PC-3 (cell line): ENCODE measurements at regions of chr10 and their contacts with region 1.

Region 1: DNA sequence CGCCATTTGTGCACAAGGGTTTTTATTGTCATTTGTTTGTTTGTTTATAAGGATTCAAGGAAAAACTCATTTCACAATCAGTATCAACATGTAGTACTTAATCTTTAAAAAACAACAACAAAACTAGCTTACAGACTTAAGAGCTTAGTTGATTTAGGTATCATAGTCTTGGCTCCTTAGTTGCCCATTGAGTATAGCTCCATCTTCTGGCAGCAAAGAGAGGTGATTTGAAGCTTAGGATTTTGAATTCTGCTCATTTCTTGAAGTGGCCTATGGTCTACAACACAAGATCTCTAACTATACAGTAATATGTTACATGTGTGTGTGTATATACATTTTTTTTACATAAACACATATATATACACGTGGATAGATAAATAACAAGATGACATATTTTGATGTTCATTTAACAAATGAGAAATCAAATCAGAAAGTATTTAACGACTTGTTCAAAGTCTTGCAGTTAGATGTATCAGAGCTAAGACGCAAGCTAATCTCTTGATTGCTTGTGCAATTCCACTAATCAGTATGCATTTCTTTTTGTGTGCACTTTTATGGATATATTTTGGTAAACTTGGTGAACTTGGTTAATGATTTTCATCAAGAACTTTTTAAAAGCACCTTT is 307.3 kb downstream of the CAMK1D start:
- DNase-seq: peak; percentile 60
- ATAC-seq: peak; percentile 43
- H3K4me3 ChIP-seq: no peak overlapping the region
- H3K27ac ChIP-seq: no peak overlapping the region
- H3K4me1 ChIP-seq: no peaks in the 10 kb centered on the region
- H3K27me3 ChIP-seq: no peaks in the 10 kb centered on the region
- CTCF ChIP-seq: peak; percentile 76

Region 2: DNA sequence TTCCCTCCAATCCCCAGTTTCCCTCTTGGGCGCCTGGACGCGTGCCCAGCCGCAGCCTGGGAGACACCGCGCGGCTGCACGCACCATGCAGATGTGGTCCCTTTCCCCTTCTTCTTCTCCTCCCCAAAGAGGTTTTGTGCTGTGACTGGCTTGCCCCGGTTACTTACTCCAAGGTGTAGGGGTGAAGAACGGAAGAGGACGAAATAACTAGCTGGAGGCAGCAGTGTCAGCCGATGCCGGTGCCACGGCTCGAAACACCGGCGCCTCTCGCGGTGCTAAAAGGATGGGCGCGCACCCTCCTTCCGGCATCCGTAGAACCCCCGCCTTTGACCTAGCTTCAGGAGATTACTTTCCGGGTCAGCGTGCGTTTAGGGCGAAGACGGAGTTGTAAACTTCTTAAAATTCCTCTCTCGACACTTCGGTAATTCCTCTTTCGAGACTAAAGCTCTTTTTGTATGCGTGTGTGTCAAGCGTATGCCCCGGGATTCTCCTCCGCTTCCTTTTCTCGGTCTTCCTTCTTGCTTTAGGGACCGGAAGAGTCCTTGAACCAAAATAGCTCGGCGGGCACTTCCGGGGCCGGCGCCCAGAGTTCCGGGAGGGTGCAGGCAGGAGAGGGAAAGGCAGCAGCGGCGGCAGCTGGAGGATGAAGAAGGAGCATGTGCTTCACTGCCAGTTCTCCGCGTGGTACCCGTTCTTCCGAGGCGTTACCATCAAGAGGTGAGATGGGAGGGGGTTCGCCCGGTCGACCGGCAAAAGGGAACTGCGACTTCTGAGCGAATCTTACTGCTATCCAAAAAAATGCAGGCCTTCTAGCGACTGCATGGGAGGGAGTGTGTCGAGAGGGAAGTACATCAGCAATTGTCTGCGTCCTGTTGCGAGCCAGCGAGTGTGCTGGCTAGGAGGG is 460.8 kb before region 1 on chr10 and contains the starts of genes CDC123 and NUDT5:
- CTCF ChIA-PET with region 1: no interaction called
- POLR2A ChIA-PET with region 1: no interaction called
- intact Hi-C with region 1: no loop called
- DNase-seq: peak; percentile 72
- ATAC-seq: peak; percentile 91
- H3K4me3 ChIP-seq: peak within 1 kb of the TSS; percentile 98
- H3K27ac ChIP-seq: peak within 1 kb of the TSS; percentile 77
- H3K4me1 ChIP-seq: peaks cover 11% of the 10 kb centered on the region; the same call in 1 of the 2 replicates
- H3K27me3 ChIP-seq: no peaks in the 10 kb centered on the region
- CTCF ChIP-seq: no peak
- total RNA-seq, gene CDC123: 74.2 and 110 TPM in 2 replicates
- total RNA-seq, gene NUDT5: 39.3 and 57.0 TPM in 2 replicates

Region 3: GRCh38 chr10:12308057-12308456 is 348.6 kb before region 1 on chr10:
- CTCF ChIA-PET with region 1: no interaction called
- POLR2A ChIA-PET with region 1: no interaction called
- intact Hi-C with region 1: no loop called
- DNase-seq: no peak
- ATAC-seq: no peak
- H3K4me3 ChIP-seq: no peak overlapping the region
- H3K27ac ChIP-seq: no peak overlapping the region
- H3K4me1 ChIP-seq: no peaks in the 10 kb centered on the region
- H3K27me3 ChIP-seq: no peaks in the 10 kb centered on the region
- CTCF ChIP-seq: no peak

Region 4: GRCh38 chr10:12466704-12467305 is 189.8 kb before region 1 on chr10:
- CTCF ChIA-PET with region 1: no interaction called
- POLR2A ChIA-PET with region 1: no interaction called
- intact Hi-C with region 1: loop called (anchors 10 kb)
- DNase-seq: no peak
- ATAC-seq: no peak
- H3K4me3 ChIP-seq: no peak overlapping the region
- H3K27ac ChIP-seq: no peak overlapping the region
- H3K4me1 ChIP-seq: peaks cover 6% of the 10 kb centered on the region; the same call in 1 of the 2 replicates
- H3K27me3 ChIP-seq: no peaks in the 10 kb centered on the region
- CTCF ChIP-seq: no peak

Region 5: DNA sequence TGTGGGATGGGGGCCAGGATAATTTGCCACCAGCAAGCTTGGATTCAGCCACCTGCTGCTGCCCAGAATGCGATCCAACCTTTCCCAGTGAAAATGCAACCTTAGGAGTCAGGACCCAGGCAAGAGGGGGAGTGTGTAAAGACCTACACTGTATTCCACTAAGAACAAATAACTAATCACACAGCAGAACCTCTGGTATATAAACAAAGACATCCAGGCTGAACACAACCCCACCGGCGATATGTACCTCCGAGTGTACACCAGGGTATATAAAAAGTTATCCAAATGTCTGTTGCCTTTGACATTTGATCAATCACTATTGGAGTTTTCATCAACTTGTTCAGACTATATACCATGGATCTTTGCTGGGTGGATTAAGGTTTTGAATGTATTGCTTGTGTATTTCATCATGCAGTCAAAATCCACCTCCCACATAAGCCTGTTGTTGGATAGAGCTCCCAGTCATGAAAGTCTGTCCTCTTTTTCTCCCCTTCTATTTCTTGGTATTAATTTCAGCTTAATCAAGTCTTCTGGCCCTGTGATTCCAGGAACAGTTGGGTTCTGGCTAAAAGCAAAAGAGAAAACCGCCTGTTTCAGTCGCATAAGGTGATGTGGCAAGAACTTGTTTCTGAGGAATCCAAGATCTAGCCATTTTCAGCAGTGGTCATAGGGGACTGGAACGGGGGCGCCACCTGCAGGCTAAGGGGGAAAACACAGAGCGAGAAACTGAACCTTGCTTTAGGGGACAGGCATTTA is 54.1 kb after region 1 on chr10:
- CTCF ChIA-PET with region 1: interaction called, 9 read pairs
- POLR2A ChIA-PET with region 1: no interaction called
- intact Hi-C with region 1: loop called (anchors 1 kb)
- DNase-seq: peak; percentile 63
- ATAC-seq: peak; percentile 25
- H3K4me3 ChIP-seq: no peak overlapping the region
- H3K27ac ChIP-seq: peak overlapping the region; percentile 100; the same call in 1 of the 2 replicates
- H3K4me1 ChIP-seq: peaks cover 62% of the 10 kb centered on the region
- H3K27me3 ChIP-seq: no peaks in the 10 kb centered on the region
- CTCF ChIP-seq: peak; percentile 76